ENCODE measurements at regions of chrX and their contacts with region 1.

Region 1: GRCh38 chrX:72705814-72706213 is 8.3 kb downstream of the PHKA1 start:
- DNase-seq: no peak
- ATAC-seq: no peak
- H3K4me3 Mint-ChIP-seq: no peak overlapping the region
- H3K27ac Mint-ChIP-seq: no peak overlapping the region
- H3K4me1 Mint-ChIP-seq: peaks cover 3% of the 10 kb centered on the region
- H3K27me3 Mint-ChIP-seq: no peaks in the 10 kb centered on the region

Region 2: GRCh38 chrX:72644946-72645345 is 60.9 kb before region 1 on chrX:
- CTCF ChIA-PET with region 1: no interaction called
- POLR2A ChIA-PET with region 1: no interaction called
- intact Hi-C with region 1: loop called in 1 of 2 experiments (anchors 10 kb)
- DNase-seq: no peak
- ATAC-seq: no peak
- H3K4me3 Mint-ChIP-seq: no peak overlapping the region
- H3K27ac Mint-ChIP-seq: no peak overlapping the region
- H3K4me1 Mint-ChIP-seq: no peaks in the 10 kb centered on the region
- H3K27me3 Mint-ChIP-seq: no peaks in the 10 kb centered on the region